GM23248 (cell line): ENCODE measurements at regions of chr17 and their contacts with region 1.

Region 1: DNA sequence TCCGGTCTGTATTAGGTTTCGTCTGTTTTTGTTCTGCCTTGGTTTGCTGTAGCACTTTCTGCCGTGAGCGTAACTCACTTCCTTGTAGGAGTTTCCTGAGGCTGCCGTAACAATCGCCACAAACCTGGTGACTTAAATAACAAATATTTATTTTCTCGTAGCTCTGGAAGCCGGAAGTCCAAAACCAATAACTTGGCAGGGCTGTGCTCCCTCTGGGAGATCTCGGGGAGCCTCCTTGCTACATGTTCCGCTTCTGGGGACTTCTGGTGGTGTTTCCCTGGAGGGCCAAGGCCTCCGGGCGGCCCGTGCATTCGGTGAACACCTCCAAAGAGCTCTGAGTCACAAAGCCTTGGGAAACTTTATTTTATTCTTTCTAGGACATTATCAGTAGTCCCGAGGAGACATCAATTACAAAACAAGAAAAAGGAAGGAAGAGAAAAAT is 6.8 kb upstream of the WDR45B start:
- DNase-seq: no peak
- H3K4me3 ChIP-seq: no peak overlapping the region
- H3K27ac ChIP-seq: no peak overlapping the region
- H3K4me1 ChIP-seq: no peaks in the 10 kb centered on the region
- H3K27me3 ChIP-seq: no peaks in the 10 kb centered on the region

Region 2: DNA sequence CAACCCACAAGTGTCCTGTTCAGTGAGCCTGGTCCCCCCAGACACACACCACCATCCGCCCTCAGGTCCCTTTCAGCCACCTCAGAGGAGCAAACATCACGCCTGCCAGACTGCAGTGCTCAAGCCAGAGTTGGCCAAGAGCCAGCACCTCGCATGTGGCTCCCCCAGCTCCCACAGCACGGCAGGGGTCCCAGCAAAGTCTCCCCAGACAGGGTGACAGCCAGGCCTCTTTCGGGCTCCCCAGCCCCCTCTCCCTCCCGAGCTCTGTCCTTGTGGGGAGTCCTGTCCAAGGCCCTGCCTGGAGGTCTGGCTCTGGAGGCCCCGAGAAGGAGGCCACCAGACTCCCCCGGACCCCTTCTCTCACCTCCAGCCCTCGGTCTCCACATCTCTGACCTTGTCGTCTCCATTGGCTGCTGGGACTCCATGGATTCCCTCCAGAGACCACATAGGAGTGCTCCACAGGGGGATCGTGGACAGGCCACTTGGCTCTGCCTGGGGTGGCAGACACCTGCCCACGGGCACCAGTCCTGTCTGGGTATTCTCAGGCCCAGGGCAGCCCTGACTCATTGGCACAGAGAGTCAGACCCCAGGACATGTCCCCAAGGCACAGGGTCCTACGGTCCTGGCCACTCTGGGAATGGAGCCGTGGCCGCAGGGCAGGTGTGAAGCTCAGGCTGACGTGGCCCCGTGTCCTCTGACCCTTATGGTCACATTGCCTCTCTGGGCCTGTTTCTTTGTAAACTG is 706.3 kb before region 1 on chr17:
- in situ Hi-C with region 1: no loop called
- DNase-seq: no peak
- H3K4me3 ChIP-seq: no peak overlapping the region
- H3K27ac ChIP-seq: no peak overlapping the region
- H3K4me1 ChIP-seq: no peaks in the 10 kb centered on the region
- H3K27me3 ChIP-seq: no peaks in the 10 kb centered on the region

Region 3: GRCh38 chr17:82709024-82709675 is 54.1 kb after region 1 on chr17:
- in situ Hi-C with region 1: loop called (anchors 5 kb)
- DNase-seq: no peak
- H3K4me3 ChIP-seq: no peak overlapping the region
- H3K27ac ChIP-seq: no peak overlapping the region
- H3K4me1 ChIP-seq: no peaks in the 10 kb centered on the region
- H3K27me3 ChIP-seq: no peaks in the 10 kb centered on the region

Region 4: DNA sequence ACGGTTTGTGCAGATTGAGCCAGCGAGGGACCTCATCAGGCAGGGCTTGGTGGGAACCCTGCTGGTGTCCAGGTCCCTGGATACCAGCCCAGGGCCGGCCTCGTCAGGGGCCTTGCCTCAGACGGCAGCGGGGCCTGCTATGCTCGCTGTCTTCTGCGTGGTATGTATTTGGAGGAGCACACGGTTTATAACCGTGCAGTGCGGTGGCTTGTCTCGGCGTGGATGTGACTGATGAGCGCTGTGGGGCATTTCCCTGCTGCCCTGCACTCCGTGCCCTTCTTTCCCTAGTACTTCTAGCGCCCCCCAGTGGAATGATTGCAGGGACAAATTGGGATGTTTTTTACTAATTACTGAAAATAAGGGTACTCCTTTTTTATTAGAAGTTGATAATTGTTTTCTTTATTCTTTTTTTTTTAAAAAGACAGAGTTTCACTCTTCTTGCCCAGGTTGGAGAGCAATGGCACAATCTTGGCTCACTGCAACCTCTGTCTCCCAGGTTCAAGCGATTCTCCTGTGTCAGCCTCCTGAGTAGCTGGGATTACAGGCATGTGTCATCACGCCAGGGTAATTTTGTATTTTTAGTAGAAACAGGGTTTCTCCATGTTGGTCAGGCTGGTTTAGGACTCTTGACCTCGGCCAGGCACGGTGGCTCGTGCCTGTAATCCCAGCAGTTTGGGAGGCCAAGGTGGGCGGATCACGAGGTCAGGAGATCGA is 112.1 kb after region 1 on chr17:
- in situ Hi-C with region 1: loop called (anchors 5 kb)
- DNase-seq: peak; percentile 67
- H3K4me3 ChIP-seq: no peak overlapping the region
- H3K27ac ChIP-seq: no peak overlapping the region
- H3K4me1 ChIP-seq: no peaks in the 10 kb centered on the region; the same call in 1 of the 2 replicates
- H3K27me3 ChIP-seq: no peaks in the 10 kb centered on the region